ENCODE measurements at regions of chr2 and their contacts with region 1.

Region 1: GRCh38 chr2:211329432-211329831 is 773.0 kb downstream of the CPS1 start:
- DNase-seq: no peak
- ATAC-seq: no peak
- H3K4me3 ChIP-seq: no peak overlapping the region
- H3K27ac ChIP-seq: no peak overlapping the region
- H3K4me1 ChIP-seq: no peaks in the 10 kb centered on the region
- H3K27me3 ChIP-seq: no peaks in the 10 kb centered on the region
- CTCF ChIP-seq: no peak

Region 2: GRCh38 chr2:211760103-211760502 is 430.7 kb after region 1 on chr2:
- CTCF ChIA-PET with region 1: no interaction called
- POLR2A ChIA-PET with region 1: interaction called, 10 read pairs
- in situ Hi-C with region 1: no loop called
- intact Hi-C with region 1: no loop called
- DNase-seq: no peak
- ATAC-seq: no peak
- H3K4me3 ChIP-seq: no peak overlapping the region
- H3K27ac ChIP-seq: no peak overlapping the region
- H3K4me1 ChIP-seq: no peaks in the 10 kb centered on the region
- H3K27me3 ChIP-seq: no peaks in the 10 kb centered on the region
- CTCF ChIP-seq: no peak

Region 3: GRCh38 chr2:212628586-212628985 is 1299.2 kb after region 1 on chr2:
- CTCF ChIA-PET with region 1: no interaction called
- POLR2A ChIA-PET with region 1: interaction called, 17 read pairs
- in situ Hi-C with region 1: no loop called
- intact Hi-C with region 1: no loop called
- DNase-seq: no peak
- ATAC-seq: no peak
- H3K4me3 ChIP-seq: no peak overlapping the region
- H3K27ac ChIP-seq: no peak overlapping the region
- H3K4me1 ChIP-seq: no peaks in the 10 kb centered on the region
- H3K27me3 ChIP-seq: no peaks in the 10 kb centered on the region
- CTCF ChIP-seq: no peak